HEK293T (cell line): ENCODE measurements at regions of chr16 and their contacts with region 1.

Region 1: DNA sequence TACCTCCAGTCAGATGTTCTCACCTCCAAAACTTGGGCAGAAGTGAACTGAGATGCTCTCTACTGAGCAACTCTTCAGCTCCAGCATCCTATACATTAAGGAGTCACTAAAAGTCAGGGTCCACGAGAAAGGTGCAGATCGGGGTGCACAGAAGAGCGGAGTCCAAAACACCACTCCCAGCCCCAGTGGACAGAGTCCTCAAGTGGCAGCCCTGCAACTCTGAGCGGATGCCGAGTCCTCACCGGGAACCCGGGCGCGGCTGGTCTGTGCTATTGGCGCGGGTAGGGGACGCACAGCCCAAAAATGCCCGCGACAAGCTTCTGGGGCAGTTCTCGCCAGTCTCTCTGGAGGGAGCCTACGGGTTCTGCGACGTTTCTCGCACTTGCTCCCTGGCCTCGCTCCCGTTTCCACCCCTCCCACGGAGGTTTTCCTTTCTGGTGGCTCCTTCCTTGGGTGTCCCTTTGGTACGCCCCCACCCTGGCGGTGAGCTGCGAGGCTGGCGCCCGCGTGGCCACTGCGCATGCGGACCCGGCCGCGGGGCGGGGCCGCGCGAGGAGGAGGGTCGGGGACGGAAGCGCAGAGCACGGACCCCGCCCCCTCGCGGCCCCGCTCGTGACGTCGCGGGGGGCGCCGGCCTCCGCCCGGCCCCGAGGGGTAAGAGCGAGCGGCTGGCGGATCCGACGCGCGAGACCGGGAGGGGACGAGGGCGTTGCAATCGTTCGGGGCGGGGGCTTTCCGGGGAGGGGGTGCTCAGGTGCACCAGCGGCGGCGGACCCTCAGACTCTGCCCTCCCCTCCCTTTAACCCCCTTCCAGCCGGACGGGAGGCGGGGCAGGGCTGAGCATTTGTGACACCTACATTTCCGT is at the start of gene TMEM219:
- DNase-seq: peak; percentile 100

Region 2: GRCh38 chr16:29745853-29746345 is 215.8 kb before region 1 on chr16 and contains the start of gene C16orf54:
- CTCF ChIA-PET with region 1: no interaction called
- POLR2A ChIA-PET with region 1: no interaction called
- DNase-seq: no peak

Region 3: DNA sequence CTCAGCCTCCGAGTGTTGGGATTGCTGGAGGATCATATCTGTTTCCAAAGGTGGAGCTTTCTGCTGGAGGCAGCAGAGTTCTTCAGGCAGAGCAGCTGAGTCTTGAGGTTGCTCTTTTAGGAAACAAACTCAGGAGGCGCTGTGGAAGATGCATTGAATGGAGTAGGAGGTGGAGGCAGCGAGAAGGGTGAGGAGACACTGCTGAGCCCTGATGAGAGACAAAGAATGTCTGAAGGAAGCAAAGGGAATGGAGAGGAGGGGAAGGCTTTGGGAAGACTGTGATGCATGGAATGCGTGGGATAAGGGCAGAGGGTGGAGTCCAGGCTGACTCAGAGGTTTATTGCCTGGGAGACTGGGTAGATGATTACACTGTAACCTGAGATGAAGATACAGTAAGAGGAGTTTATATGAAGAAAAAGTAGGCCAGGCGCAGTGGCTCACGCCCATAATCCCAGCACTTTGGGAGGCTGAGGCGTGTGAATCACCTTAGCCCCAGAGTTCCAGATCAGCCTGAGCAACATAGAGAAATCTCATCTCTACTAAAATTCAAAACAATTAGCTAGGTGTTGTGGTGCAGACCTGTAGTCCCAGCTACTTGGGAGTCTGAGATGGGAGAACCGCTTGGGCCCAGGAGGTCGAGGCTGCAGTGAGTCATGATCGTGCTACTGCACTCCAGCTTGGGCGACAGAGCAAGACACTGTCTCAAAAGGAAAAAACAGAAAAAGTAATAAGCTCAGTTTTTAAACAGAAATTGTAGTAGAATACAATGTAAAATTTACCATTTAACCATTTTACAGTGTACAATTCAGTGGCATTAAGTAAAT is 17.7 kb before region 1 on chr16:
- CTCF ChIA-PET with region 1: interaction called, 9 read pairs
- POLR2A ChIA-PET with region 1: interaction called, 54 read pairs
- DNase-seq: peak; percentile 87

Region 4: GRCh38 chr16:29995911-29996772 is 34.4 kb after region 1 on chr16 and contains the start of gene INO80E:
- CTCF ChIA-PET with region 1: interaction called, 4 read pairs
- POLR2A ChIA-PET with region 1: interaction called, 10 read pairs
- DNase-seq: peak; percentile 100

Region 5: DNA sequence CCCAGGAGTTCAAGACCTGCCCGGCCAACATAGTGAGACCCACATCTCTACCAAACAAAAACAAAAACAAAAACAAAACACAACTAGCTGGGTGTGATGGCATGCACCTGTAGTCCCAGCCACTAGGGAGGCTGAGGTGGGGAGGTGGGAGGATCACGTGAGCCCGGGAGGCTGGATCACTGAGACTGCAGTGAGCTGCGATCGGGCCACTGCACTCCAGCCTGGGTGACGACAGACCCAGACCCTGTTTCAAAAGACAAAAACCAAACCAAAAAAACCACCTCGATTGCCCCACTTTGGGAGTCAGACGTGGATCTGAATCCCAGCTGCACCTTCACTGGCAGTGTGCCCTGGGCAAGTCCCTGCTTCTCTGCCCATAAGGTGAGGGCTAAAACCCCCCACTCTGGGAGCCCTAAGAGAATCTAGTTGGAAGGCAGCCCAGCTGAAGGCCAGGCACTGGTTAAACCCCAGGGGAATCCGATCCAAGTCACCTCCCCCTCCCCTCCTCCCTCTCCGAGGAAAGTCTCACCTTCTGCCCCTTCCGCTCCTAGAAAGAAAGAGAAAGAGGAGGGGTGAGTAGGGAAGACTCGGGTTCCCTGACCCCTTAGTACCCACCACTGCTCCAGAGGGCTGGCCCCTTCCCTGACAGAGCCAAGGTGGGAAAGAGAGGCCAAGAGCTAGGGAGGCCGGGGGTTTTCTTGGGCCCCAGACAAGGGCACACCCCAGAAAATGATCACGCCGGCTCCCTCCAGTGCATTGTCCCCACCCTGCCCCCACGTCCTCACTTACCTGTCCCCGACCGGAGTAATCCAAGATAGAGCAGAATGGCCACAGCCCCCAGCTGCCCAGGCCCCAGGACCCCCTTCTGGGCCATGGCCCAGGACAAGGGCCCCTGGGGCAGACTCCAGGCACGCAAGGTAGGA is 1173.2 kb after region 1 on chr16:
- CTCF ChIA-PET with region 1: no interaction called
- POLR2A ChIA-PET with region 1: no interaction called
- DNase-seq: no peak